A549 (cell line): ENCODE measurements at regions of chr16 and their contacts with region 1.

Region 1: DNA sequence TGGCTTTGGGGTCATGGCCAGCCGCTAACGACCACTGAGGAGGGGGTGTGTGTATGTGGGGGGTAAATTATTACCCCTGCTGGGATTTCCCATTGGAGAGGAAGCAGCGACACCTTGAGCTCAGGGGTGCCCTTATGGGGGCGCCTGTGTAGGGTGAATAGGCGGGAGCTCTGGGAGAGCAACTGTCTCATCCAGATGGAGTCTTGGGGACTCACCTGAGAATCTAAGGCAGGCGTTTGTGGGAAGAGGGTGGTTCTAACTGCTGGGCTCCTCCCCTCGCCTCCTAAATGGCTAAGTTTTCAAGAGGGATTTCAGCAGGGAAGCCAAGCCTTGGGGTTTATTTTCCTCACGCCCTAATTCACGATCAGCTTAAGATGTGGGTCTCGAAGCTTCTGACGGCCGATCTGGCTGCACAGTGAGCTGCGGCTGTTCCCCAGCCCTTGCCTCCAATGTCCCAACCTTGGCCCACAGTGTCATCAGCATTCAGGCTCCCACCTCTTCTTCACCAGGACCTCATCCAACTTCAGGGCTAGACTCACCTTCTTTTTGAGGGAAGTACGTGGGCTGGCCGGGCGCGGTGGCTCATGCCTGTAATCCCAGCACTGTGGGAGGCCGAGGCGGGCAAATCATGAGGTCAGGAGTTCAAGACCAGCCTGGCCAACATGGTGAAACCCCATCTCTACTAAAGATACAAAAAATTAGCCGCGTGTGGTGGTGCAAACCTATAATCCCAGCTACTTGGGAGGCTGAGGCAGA is 136.9 kb upstream of the EEF2KMT start:
- DNase-seq: no peak
- ATAC-seq: no peak; a peak in 1 of 6 replicates
- H3K4me3 ChIP-seq: no peak overlapping the region
- H3K27ac ChIP-seq: no peak overlapping the region
- H3K4me1 ChIP-seq: no peaks in the 10 kb centered on the region
- CTCF ChIP-seq: no peak
- EP300 ChIP-seq: no peak
- POLR2A ChIP-seq: no peak
- RAD21 ChIP-seq: no peak

Region 2: GRCh38 chr16:5215901-5216300 is 18.6 kb before region 1 on chr16:
- CTCF ChIA-PET with region 1: no interaction called
- POLR2A ChIA-PET with region 1: no interaction called
- DNase-seq: no peak
- ATAC-seq: no peak
- H3K4me3 ChIP-seq: no peak overlapping the region
- H3K27ac ChIP-seq: no peak overlapping the region
- H3K4me1 ChIP-seq: no peaks in the 10 kb centered on the region
- CTCF ChIP-seq: no peak
- EP300 ChIP-seq: no peak
- POLR2A ChIP-seq: no peak
- RAD21 ChIP-seq: no peak

Region 3: DNA sequence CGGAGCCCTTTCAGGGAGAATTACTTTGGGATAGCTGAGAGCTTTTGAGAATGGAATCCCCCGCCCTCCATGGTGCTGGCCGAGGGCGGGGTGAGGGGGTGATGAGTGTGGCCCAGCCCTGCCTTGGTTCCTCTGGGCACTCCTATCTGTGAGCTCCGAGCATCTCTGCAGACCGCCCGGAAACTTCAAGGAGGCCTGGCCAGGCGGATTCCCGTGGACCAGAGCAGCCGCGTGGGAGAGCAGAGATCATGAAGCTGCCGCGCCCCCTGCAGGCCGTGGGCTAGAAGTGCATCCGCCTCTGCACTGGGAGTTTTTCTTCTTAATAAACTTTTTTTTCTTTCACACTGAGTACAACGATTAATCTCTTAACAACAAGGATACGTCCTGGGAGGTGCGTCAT is 256.0 kb after region 1 on chr16:
- CTCF ChIA-PET with region 1: interaction called, 11 read pairs
- POLR2A ChIA-PET with region 1: no interaction called
- DNase-seq: peak; percentile 9 to 48
- ATAC-seq: peak in 1 of 2 experiments; percentile 73; a peak in 3 of 6 replicates
- H3K4me3 ChIP-seq: no peak overlapping the region
- H3K27ac ChIP-seq: no peak overlapping the region
- H3K4me1 ChIP-seq: no peaks in the 10 kb centered on the region
- CTCF ChIP-seq: peak; percentile 38
- EP300 ChIP-seq: no peak
- POLR2A ChIP-seq: no peak
- RAD21 ChIP-seq: peak; percentile 33 to 64; a peak in 2 of 5 replicates

Region 4: DNA sequence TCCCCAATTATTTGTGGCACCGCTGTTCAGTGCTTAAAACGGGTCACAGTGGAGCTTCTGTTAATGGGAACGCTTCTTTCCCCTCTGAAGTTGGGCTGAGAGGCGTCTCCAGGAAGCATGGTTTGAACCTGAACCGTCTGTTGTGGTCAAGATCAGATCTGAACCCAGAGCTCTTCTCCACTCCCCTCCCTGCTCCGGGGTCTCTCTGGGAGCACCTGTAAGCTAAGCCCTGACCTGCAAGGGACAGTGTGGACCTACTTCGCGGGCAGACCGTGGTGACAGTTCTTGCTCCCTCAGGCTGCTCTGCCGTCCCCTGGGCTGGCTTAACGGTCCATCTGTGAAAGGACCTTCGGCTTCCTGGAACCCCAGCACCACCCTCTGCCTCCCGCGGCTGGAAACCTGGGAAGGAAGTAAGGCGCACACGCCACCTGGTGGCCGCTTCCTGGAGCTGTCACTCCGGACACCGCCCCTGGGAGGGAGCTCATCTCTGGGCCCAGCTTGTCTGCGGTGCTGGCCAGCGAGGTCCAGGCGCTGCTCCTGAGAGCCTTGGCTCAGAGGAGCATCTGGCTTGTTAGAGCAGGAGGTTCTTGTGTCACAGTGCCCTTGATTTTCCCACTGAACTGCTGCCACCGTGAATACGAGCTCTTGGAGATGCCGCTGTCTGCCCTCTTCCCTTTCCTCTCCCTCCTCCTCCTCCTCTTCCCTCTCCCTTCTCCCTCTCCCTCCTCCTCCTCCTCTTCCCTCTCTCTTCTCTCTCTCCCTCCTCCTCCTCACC is 381.6 kb after region 1 on chr16:
- CTCF ChIA-PET with region 1: interaction called, 10 read pairs
- POLR2A ChIA-PET with region 1: no interaction called
- DNase-seq: peak; percentile 58
- ATAC-seq: peak; percentile 90 to 99
- H3K4me3 ChIP-seq: no peak overlapping the region
- H3K27ac ChIP-seq: no peak overlapping the region
- H3K4me1 ChIP-seq: no peaks in the 10 kb centered on the region
- CTCF ChIP-seq: peak; percentile 59
- EP300 ChIP-seq: no peak
- POLR2A ChIP-seq: no peak
- RAD21 ChIP-seq: peak; percentile 47 to 56

Region 5: DNA sequence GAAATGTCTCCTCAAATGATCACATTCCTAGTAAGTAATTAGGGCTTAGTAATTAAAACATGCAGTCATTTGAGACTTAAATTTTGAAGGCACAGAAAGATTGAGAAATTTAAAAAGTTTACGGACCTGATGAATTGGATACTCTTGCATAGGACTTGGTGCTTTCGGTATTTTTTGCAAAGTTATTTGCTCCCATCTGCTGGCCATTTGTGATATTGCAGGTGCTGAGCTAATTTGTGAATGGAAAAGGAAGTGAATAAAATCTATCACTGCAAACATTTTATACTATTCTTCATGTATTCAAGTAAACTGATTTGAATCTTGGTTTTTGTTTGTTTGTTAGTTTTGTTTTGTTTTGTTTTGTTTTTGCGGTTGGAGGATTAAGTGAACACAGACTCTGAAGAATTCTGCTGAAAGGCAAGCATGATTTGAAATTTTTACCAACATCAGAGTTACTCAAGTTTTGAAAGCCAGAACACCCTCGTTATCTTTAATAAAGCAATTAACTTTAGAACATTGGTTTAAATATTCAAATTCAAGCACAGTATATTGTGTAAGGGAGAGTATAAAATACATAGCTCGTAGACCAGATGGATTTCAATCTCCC is 1408.7 kb after region 1 on chr16:
- CTCF ChIA-PET with region 1: interaction called, 11 read pairs
- POLR2A ChIA-PET with region 1: no interaction called
- DNase-seq: peak; percentile 2 to 45
- ATAC-seq: peak in 1 of 2 experiments; percentile 41; a peak in 2 of 6 replicates
- H3K4me3 ChIP-seq: no peak overlapping the region
- H3K27ac ChIP-seq: no peak overlapping the region
- H3K4me1 ChIP-seq: no peaks in the 10 kb centered on the region
- CTCF ChIP-seq: peak; percentile 74
- EP300 ChIP-seq: no peak
- POLR2A ChIP-seq: no peak
- RAD21 ChIP-seq: peak; percentile 82 to 87